AG04450 (cell line): ENCODE measurements at regions of chr16 and their contacts with region 1.

Region 1: GRCh38 chr16:74862741-74863244 is 88.2 kb upstream of the FA2H start:
- DNase-seq: no peak
- H3K4me3 ChIP-seq: no peak overlapping the region
- H3K27ac ChIP-seq: no peak overlapping the region
- H3K27me3 ChIP-seq: peaks cover 2% of the 10 kb centered on the region
- CTCF ChIP-seq: peak; percentile 80

Region 2: DNA sequence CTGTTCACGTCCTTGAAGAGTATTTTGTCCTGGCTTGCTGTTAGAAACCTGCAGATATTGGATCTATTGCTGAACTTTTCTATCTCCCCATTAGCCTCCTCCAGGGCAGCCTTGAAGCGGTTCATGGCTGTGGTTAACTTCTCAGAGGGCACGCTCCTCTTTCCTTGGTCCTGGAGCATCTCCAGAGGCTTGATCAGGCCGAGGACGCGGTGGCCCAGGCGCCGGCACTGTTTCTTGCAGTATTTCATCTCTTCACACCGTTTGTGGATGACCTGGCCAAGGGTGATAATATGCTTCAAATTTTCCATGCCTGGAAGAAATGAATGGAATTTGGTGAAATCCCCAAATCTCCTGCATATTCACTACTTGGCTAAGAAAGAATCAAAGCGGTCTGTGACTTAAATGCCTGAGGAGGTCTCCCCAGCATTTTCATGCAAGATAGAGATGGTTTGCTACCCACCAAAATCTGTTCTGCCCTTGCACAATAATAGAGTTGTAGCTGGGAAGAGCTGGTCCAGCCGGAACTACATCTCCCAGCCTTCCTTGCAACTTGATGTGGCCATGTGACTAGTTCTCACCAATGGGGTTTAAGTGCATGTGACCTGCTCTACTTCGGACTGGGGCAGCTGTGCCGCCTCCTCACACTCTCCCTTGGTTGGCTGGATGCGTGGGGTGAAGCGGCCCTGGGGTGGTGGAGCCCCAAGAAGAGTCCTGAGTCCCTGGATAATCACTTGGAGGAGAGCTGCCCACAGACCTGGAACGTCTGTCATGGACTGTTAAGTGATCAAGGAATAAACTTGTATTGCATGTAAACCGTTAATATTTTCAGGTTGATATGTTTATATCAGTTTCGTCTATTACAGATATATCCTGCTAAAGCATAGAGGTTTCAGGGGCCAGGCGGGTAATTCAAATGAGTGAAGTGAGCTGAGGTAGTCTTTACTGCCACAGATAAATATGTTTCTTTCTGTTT is 167.1 kb before region 1 on chr16:
- CTCF ChIA-PET with region 1: interaction called, 25 read pairs
- POLR2A ChIA-PET with region 1: no interaction called
- DNase-seq: peak; percentile 78
- H3K4me3 ChIP-seq: peak overlapping the region; percentile 59
- H3K27ac ChIP-seq: no peak overlapping the region
- H3K27me3 ChIP-seq: no peaks in the 10 kb centered on the region
- CTCF ChIP-seq: no peak

Region 3: DNA sequence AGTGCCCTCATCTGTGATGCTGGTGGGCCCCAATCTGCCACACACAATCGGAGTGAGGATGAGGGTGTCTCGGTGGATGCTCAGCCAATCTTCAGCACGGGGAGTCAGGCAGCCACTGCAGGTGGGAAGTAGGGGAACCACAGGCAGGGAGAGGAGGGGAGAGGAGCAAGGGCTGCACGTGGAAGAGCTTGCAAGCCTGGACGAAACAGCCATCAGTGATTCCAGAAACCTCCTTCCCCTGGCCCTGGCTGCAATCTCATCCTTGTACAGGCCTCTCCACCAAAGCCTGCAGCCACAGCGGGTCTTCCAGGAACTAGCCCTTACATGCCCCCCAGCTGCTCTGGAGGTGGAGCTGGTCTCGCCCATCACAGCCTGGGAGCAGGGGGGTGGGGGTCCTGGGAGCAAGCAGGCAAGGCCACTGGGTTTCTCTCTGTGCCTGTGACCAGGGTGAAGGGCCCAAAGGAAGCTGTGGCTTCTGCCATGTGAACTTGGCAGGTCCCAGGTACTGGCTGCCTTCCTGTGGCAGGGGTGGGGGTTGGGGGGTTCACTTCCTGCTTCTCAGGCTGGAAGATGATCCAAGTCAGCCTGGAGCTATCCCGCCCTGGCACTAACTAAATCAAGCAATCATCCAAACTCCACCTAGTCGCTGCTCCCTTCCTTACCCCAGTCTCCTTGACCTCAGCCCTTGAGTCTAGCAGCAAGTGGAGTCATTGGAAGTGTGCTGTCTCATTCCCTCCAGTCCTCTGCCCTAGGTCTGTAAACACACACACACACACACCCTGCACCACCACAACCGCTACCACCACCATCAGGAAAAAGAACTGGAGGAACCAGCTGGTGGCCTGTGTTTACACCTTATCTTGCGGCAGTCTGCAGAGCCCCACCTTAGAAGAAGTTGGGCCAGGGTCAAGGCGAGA is 132.8 kb before region 1 on chr16:
- CTCF ChIA-PET with region 1: interaction called, 19 read pairs
- POLR2A ChIA-PET with region 1: no interaction called
- DNase-seq: no peak
- H3K4me3 ChIP-seq: no peak overlapping the region
- H3K27ac ChIP-seq: no peak overlapping the region
- H3K27me3 ChIP-seq: no peaks in the 10 kb centered on the region
- CTCF ChIP-seq: no peak

Region 4: GRCh38 chr16:74813109-74813641 is 49.6 kb before region 1 on chr16:
- CTCF ChIA-PET with region 1: interaction called, 50 read pairs
- POLR2A ChIA-PET with region 1: no interaction called
- DNase-seq: peak; percentile 4
- H3K4me3 ChIP-seq: no peak overlapping the region
- H3K27ac ChIP-seq: no peak overlapping the region
- H3K27me3 ChIP-seq: peaks cover 16% of the 10 kb centered on the region
- CTCF ChIP-seq: peak; percentile 90

Region 5: DNA sequence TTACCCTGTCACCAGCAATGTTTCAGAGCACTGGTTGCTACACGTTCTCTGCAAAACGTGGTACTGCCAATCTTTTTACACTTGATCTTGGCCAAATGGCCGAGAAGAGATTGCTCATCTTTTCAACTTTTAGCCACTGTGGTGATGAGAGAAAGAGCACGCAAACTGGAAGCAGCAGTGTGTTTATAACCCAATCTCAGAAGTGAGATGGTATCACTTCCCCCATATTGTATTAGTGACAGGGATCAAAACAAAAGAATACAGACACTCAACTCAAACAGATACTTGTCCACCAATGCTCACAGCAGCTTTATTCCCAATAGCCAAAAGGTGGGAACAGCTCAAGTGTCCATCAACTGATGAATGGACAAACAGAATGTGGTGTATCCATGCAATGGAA is 16.1 kb before region 1 on chr16:
- CTCF ChIA-PET with region 1: interaction called, 38 read pairs
- POLR2A ChIA-PET with region 1: no interaction called
- DNase-seq: no peak
- H3K4me3 ChIP-seq: no peak overlapping the region
- H3K27ac ChIP-seq: no peak overlapping the region
- H3K27me3 ChIP-seq: peaks cover 6% of the 10 kb centered on the region
- CTCF ChIP-seq: no peak

Region 6: GRCh38 chr16:74888208-74888852 is 25.5 kb after region 1 on chr16:
- CTCF ChIA-PET with region 1: interaction called, 25 read pairs
- POLR2A ChIA-PET with region 1: no interaction called
- DNase-seq: no peak
- H3K4me3 ChIP-seq: no peak overlapping the region
- H3K27ac ChIP-seq: no peak overlapping the region
- H3K27me3 ChIP-seq: no peaks in the 10 kb centered on the region
- CTCF ChIP-seq: no peak